ENCODE measurements at regions of chr3 and their contacts with region 1.

Region 1: GRCh38 chr3:46923559-46924350 is 46.2 kb downstream of the PTH1R start:
- DNase-seq: peak in 2 of 3 donors; percentile 45 to 48
- H3K4me3 ChIP-seq: no peak overlapping the region
- H3K4me3 Mint-ChIP-seq: no peak overlapping the region
- H3K27ac ChIP-seq: peak overlapping the region in 1 of 2 donors; percentile 63
- H3K27ac Mint-ChIP-seq: peak overlapping the region in 5 of 7 donors; percentile 38 to 88 (median 81)
- H3K4me1 ChIP-seq: peaks cover 38 to 50% of the 10 kb centered on the region in 2 donors
- H3K4me1 Mint-ChIP-seq: peaks cover 42% of the 10 kb centered on the region
- H3K27me3 ChIP-seq: no peaks in the 10 kb centered on the region
- H3K27me3 Mint-ChIP-seq: no peaks in the 10 kb centered on the region
- CTCF ChIP-seq: peak; percentile 83

Region 2: DNA sequence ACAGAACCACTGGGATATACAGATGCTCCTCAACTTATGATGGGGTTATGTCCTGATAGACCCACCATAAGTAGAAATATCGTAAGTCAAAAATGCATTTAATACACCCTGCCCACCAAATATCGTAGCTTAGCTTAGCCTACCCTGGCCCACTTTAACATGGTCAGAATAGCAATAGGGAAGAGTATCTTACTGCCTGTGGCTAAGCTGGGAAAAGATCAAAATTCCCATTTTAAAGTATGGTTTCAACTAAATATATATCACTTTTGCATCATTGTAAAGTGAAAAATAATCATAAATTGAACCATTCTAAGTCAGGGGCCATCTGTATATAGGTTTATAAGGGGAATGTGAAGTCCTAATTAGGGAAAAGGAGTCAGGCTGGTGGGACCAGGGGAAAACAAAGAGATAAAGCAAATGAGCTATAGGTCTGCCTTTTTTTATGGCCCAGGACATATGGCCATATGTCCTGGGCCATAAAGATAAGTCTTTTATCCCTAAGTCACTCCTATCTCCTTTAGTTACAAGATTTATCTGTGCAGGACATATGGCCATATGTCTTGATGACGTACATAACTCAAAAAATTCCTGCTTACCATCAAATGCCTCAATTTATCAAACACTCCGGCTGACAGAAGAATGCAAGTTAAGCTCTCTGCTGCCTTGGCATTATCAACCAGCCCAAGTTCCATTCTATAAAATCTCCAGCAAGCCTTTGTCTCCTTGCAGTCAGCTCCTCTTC is 414.7 kb before region 1 on chr3:
- intact Hi-C with region 1: no loop called
- DNase-seq: no peak
- H3K4me3 ChIP-seq: no peak overlapping the region
- H3K4me3 Mint-ChIP-seq: no peak overlapping the region
- H3K27ac ChIP-seq: no peak overlapping the region
- H3K27ac Mint-ChIP-seq: no peak overlapping the region
- H3K4me1 ChIP-seq: no peaks in the 10 kb centered on the region
- H3K4me1 Mint-ChIP-seq: no peaks in the 10 kb centered on the region
- H3K27me3 ChIP-seq: no peaks in the 10 kb centered on the region
- H3K27me3 Mint-ChIP-seq: peaks cover 0 to 8% (median 7%) of the 10 kb centered on the region in 3 donors
- CTCF ChIP-seq: no peak

Region 3: GRCh38 chr3:46965151-46965550 is 41.4 kb after region 1 on chr3:
- intact Hi-C with region 1: loop called in 1 of 2 experiments (anchors 5 kb)
- DNase-seq: peak; percentile 63 to 82 (median 79)
- H3K4me3 ChIP-seq: peak overlapping the region in 1 of 3 experiments; percentile 46
- H3K4me3 Mint-ChIP-seq: peak overlapping the region in 1 of 2 donors; percentile 56
- H3K27ac ChIP-seq: peak overlapping the region; percentile 50 to 52
- H3K27ac Mint-ChIP-seq: peak overlapping the region; percentile 37 to 90 (median 75)
- H3K4me1 ChIP-seq: peaks cover 41 to 72% of the 10 kb centered on the region in 2 donors
- H3K4me1 Mint-ChIP-seq: peaks cover 85% of the 10 kb centered on the region
- H3K27me3 ChIP-seq: no peaks in the 10 kb centered on the region
- H3K27me3 Mint-ChIP-seq: peaks cover 0 to 3% (median 0%) of the 10 kb centered on the region in 3 donors
- CTCF ChIP-seq: no peak

Region 4: DNA sequence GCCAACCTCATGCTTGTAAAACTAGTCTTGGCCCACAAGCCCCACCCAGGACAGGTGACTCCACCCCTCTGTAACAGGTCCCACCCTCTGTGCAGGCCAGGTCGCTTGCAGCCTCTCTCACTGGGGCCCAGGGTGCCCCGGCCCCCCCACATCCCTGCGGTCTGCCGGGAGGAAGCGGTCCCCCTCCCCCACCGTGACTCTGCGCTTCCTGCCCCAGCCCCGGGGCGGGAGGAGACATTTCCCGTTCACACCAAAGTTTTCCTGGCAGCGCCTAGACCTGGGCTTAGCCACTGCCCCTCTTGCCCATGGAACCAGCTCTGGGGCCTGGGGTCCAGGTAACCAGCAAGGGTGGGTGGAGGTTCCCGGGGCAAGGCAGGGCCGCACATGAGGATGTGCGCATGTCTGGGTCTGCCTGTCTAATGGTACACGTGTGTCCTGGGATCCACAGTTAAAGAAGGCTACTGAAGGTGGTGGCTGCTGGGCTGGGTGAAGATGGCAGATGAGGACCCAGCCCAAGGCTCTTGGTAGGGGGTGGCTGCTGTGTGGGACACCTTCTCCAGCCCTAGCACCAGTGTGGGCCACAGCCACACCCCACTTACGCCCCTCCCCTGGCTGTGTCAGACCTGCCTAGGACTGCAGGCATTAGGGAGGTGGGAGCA is 64.1 kb after region 1 on chr3:
- intact Hi-C with region 1: loop called in 1 of 2 experiments (anchors 5 kb)
- DNase-seq: peak; percentile 76 to 81 (median 79)
- H3K4me3 ChIP-seq: peak overlapping the region; percentile 47 to 79 (median 55)
- H3K4me3 Mint-ChIP-seq: peak overlapping the region; percentile 80 to 90
- H3K27ac ChIP-seq: peak overlapping the region; percentile 89 to 92
- H3K27ac Mint-ChIP-seq: peak overlapping the region; percentile 93 to 99 (median 96)
- H3K4me1 ChIP-seq: peaks cover 86 to 96% of the 10 kb centered on the region in 2 donors
- H3K4me1 Mint-ChIP-seq: peaks cover 87% of the 10 kb centered on the region
- H3K27me3 ChIP-seq: no peaks in the 10 kb centered on the region
- H3K27me3 Mint-ChIP-seq: peaks cover 0 to 3% (median 2%) of the 10 kb centered on the region in 3 donors
- CTCF ChIP-seq: no peak

Region 5: DNA sequence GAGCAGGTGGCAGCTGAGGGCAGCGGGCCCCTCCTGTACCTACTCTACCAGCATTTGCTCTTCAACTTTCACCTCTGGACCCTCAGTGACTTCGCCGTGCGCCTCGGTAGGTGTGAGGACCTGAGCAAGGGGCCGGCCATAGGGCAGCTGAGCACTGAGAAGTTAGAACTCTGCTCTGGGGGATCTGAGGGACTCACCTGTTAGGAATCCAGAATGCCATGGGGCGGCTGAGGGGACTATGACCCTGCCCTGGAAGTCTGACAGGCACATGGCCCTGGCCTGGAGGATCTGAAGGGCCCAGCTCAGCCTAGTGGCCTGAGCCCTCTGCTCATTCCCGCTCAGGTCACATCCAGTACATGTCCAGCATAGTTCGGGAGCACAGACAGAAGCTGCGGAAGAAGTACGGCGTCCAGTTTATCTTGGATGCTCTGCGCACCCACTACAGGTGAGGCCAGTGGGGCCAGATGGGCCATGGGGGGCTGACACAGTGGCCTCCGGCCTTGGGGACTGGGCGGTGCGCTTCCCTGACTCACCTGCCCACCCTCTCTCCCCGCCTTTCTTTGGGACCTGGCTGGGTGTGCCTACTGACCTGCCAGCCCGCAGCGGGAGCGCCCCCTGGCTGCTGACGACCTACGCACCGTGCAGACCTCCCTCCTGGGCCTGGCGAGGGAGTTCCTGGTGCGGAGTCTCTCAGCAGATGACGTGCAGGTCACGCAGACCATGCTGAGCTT is 74.5 kb after region 1 on chr3:
- intact Hi-C with region 1: loop called (anchors 5 kb)
- DNase-seq: peak; percentile 46 to 64 (median 52)
- H3K4me3 ChIP-seq: no peak overlapping the region
- H3K4me3 Mint-ChIP-seq: no peak overlapping the region
- H3K27ac ChIP-seq: peak overlapping the region in 1 of 2 donors; percentile 59
- H3K27ac Mint-ChIP-seq: peak overlapping the region in 6 of 7 donors; percentile 62 to 87 (median 70)
- H3K4me1 ChIP-seq: peaks cover 0 to 12% of the 10 kb centered on the region in 2 donors
- H3K4me1 Mint-ChIP-seq: peaks cover 15% of the 10 kb centered on the region
- H3K27me3 ChIP-seq: no peaks in the 10 kb centered on the region
- H3K27me3 Mint-ChIP-seq: no peaks in the 10 kb centered on the region
- CTCF ChIP-seq: peak; percentile 91

Region 6: DNA sequence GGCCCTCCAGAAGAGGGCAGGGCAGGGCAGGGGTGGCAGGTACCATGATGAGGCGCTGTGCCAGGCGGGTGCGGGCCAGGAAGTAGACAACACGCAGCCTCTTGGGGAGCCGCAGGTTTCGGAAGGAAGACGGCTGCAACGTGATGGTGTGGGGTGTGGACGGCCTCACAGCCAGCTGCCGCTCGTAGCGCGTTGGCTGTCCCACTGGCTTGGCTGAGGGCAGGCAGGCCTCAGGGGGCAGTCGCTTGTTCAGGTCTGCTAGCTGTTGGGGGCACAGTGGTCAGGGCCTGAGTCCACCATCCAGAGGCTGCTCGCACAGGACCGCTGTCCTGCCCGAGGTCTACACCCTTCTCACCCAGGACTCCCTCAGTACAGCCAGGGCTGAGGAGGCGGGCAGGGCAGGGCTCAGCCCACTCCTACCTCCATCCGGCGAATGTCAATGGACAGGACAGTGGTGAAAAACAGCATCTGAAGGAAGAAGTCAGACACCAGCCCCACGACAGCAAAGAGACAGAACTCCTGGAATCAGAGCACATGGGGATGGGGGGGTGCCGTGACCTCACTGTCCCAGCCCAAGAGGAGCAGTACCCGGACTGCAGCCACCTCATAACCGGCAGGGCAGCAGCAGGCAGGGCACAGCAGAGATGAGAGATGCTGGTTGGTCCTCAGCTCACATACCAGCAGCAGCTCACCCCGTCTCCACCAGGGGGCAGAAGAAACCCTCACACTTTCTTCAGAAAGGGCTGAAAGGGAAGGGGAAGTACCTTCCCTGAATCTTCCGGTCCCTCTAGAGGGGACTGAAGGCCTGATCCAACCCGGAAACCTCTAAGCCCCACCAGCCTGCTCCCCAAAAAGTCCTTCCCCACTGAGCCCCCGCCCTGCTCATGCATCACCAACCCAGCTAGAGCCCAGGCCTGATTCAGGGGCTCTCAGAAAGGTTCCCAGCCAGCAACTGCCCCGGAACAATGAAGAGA is 497.0 kb after region 1 on chr3:
- intact Hi-C with region 1: no loop called
- DNase-seq: peak; percentile 86 to 90 (median 90)
- H3K4me3 ChIP-seq: peak overlapping the region in 1 of 3 experiments; percentile 58
- H3K4me3 Mint-ChIP-seq: peak overlapping the region; percentile 55 to 67
- H3K27ac ChIP-seq: peak overlapping the region; percentile 44 to 82
- H3K27ac Mint-ChIP-seq: peak overlapping the region; percentile 90 to 98 (median 96)
- H3K4me1 ChIP-seq: peaks cover 9 to 15% of the 10 kb centered on the region in 2 donors
- H3K4me1 Mint-ChIP-seq: peaks cover 12% of the 10 kb centered on the region
- H3K27me3 ChIP-seq: no peaks in the 10 kb centered on the region
- H3K27me3 Mint-ChIP-seq: peaks cover 0 to 1% (median 0%) of the 10 kb centered on the region in 3 donors
- CTCF ChIP-seq: peak; percentile 90